Posterior cingulate gyrus (tissue), 11 donors: ENCODE measurements at regions of chr1 and their contacts with region 1.

Region 1: GRCh38 chr1:156090822-156091188 is 8.5 kb upstream of the MEX3A start:
- DNase-seq: peak; percentile 73 to 97 (median 86)

Region 2: DNA sequence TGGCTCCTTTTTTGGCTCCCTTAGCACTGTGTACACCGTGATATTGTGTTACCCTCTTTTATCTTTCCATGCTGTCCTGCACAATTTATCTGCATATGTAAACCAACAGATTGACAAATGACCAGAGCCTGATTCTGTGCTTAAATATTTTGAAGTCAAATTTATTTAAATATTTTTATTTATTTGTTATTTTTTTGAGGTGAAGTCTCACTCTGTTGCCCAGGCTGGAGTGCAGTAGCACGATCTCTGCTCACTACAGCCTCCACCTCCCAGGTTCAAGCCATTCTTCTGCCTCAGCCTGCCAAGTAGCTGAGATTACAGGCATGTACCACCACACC is 134.8 kb after region 1 on chr1:
- intact Hi-C with region 1: loop called (anchors 2 kb)
- DNase-seq: no peak